Activated B cell treated with CpG ODN at 0.5 μM for 24 hours (primary cell): ENCODE measurements at regions of chr19 and their contacts with region 1.

Region 1: GRCh38 chr19:1863726-1864480 is 524 bp upstream of the KLF16 start:
- DNase-seq: peak; percentile 92
- ATAC-seq: peak; percentile 68
- H3K4me3 Mint-ChIP-seq: peak overlapping the region; percentile 87
- H3K27ac Mint-ChIP-seq: peak overlapping the region; percentile 92
- H3K4me1 Mint-ChIP-seq: peaks cover 36% of the 10 kb centered on the region
- H3K27me3 Mint-ChIP-seq: no peaks in the 10 kb centered on the region
- CTCF ChIP-seq: no peak

Region 2: GRCh38 chr19:1875646-1876495 is 12.0 kb after region 1 on chr19:
- CTCF ChIA-PET with region 1: interaction called, 18 read pairs
- POLR2A ChIA-PET with region 1: interaction called, 68 read pairs
- intact Hi-C with region 1: loop called (anchors 1 kb)
- DNase-seq: peak; percentile 86
- ATAC-seq: peak; percentile 94
- H3K4me3 Mint-ChIP-seq: peak overlapping the region; percentile 97
- H3K27ac Mint-ChIP-seq: peak overlapping the region; percentile 92
- H3K4me1 Mint-ChIP-seq: peaks cover 34% of the 10 kb centered on the region
- H3K27me3 Mint-ChIP-seq: no peaks in the 10 kb centered on the region
- CTCF ChIP-seq: no peak

Region 3: GRCh38 chr19:1896508-1896907 is 32.6 kb after region 1 on chr19:
- CTCF ChIA-PET with region 1: interaction called, 12 read pairs
- POLR2A ChIA-PET with region 1: interaction called, 35 read pairs
- intact Hi-C with region 1: loop called (anchors 1 kb)
- DNase-seq: no peak
- ATAC-seq: no peak
- H3K4me3 Mint-ChIP-seq: peak overlapping the region; percentile 84
- H3K27ac Mint-ChIP-seq: peak overlapping the region; percentile 97
- H3K4me1 Mint-ChIP-seq: peaks cover 45% of the 10 kb centered on the region
- H3K27me3 Mint-ChIP-seq: no peaks in the 10 kb centered on the region
- CTCF ChIP-seq: no peak

Region 4: DNA sequence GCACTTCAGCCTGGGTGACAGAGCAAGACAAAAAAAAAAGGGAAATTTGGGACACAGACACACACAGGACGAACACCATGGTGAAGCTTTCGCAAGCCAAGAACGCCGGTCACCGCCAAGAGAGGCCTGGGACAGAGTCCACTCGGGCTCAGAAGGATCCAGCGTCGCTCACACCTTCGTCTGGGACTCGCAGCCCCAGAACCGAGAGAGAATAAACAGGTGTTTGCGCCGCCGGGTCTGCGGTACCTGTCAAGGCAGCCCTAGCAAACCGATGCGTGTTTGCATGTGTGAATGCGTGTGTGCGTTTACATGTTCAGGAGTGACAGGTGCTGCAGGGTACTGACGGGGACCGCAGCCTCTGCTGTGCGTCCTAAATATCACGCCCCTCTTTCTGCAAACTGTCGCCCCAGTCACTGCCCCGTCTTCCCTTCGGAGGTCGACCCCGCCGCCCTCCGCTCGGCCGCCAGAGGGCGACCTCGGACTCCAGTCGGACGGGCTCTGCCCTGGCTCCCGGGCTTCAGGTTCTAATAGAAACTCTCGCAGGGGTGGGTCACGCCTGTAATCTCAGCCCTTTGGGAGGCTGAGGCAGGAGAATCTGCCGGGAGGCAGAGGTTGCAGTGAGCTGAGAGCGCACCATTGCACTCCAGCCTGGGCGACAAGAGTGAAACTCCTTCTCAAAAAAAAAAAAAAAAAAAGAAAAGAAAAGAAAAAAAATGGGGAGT is 65.3 kb after region 1 on chr19:
- CTCF ChIA-PET with region 1: interaction called, 8 read pairs
- POLR2A ChIA-PET with region 1: interaction called, 9 read pairs
- intact Hi-C with region 1: loop called (anchors 2 kb)
- DNase-seq: peak; percentile 86
- ATAC-seq: peak; percentile 82
- H3K4me3 Mint-ChIP-seq: peak overlapping the region; percentile 81
- H3K27ac Mint-ChIP-seq: no peak overlapping the region
- H3K4me1 Mint-ChIP-seq: peaks cover 46% of the 10 kb centered on the region
- H3K27me3 Mint-ChIP-seq: no peaks in the 10 kb centered on the region
- CTCF ChIP-seq: peak; percentile 59

Region 5: GRCh38 chr19:2050991-2051772 is 187.3 kb after region 1 on chr19 and contains the start of gene MKNK2:
- CTCF ChIA-PET with region 1: interaction called, 3 read pairs
- POLR2A ChIA-PET with region 1: interaction called, 20 read pairs
- intact Hi-C with region 1: loop called (anchors 5 kb)
- DNase-seq: peak; percentile 99
- ATAC-seq: peak; percentile 61
- H3K4me3 Mint-ChIP-seq: peak within 1 kb of the TSS; percentile 93
- H3K27ac Mint-ChIP-seq: peak within 1 kb of the TSS; percentile 97
- H3K4me1 Mint-ChIP-seq: peaks cover 77% of the 10 kb centered on the region
- H3K27me3 Mint-ChIP-seq: no peaks in the 10 kb centered on the region
- CTCF ChIP-seq: no peak
- total RNA-seq, gene MKNK2: 1,134 and 1,197 TPM in 2 replicates